ENCODE measurements at regions of chr14 and their contacts with region 1.

Region 1: GRCh38 chr14:34539407-34540180 is at the start of gene EAPP:
- DNase-seq: peak; percentile 99
- H3K4me3 ChIP-seq: peak within 1 kb of the TSS; percentile 70 to 93 (median 86)
- H3K27ac ChIP-seq: peak within 1 kb of the TSS; percentile 89 to 98 (median 96)
- H3K4me1 ChIP-seq: peaks cover 0 to 28% (median 21%) of the 10 kb centered on the region in 4 donors
- H3K27me3 ChIP-seq: no peaks in the 10 kb centered on the region
- CTCF ChIP-seq: peak in 1 of 4 experiments; percentile 12
- EP300 ChIP-seq: peak in 2 of 4 donors; percentile 23 to 70
- POLR2A ChIP-seq: peak; percentile 90 to 92
- total RNA-seq, gene EAPP: 25.5 to 44.9 (median 39.2) TPM

Region 2: GRCh38 chr14:34496679-34497513 is 42.7 kb before region 1 on chr14:
- intact Hi-C with region 1: loop called (anchors 5 kb)
- DNase-seq: peak; percentile 97
- H3K4me3 ChIP-seq: peak overlapping the region in 1 of 4 donors; percentile 16
- H3K27ac ChIP-seq: peak overlapping the region; percentile 85 to 88 (median 86)
- H3K4me1 ChIP-seq: peaks cover 0 to 27% (median 25%) of the 10 kb centered on the region in 4 donors
- H3K27me3 ChIP-seq: no peaks in the 10 kb centered on the region
- CTCF ChIP-seq: no peak
- EP300 ChIP-seq: peak; percentile 64 to 95 (median 87)
- POLR2A ChIP-seq: peak; percentile 22 to 53

Measured in sigmoid colon (tissue), 7 donors.